Activated CD4-positive, alpha-beta T cell treated with anti-CD3 and anti-CD28 coated beads, Interleukin-2, amount 10 ng/mL, durations not matched to agents 7 days and 5 days (primary cell): ENCODE measurements at regions of chr11 and their contacts with region 1.

Region 1: DNA sequence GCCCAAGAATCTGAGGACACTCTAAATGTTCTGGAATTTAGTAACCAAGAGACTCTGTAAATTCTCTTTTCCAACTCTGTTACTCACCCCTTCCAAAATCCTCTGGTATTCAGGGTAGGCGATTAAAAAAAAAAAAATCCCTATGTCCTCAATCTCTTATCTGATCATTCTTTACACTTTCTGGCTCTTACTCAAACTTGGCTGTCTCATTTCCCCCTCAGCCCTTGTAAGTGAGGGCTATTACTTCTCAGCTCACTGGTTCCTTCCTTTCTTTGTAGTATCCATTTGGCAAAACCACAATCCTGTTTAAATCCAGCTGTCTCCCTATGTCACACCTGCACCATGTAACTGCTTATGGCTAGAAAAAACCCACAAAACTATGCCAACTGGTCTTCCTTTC is 12.7 kb upstream of the MSANTD2 start:
- DNase-seq: no peak
- H3K4me3 Mint-ChIP-seq: no peak overlapping the region
- H3K27ac Mint-ChIP-seq: no peak overlapping the region
- H3K4me1 Mint-ChIP-seq: no peaks in the 10 kb centered on the region
- H3K27me3 Mint-ChIP-seq: peaks cover 40% of the 10 kb centered on the region

Region 2: DNA sequence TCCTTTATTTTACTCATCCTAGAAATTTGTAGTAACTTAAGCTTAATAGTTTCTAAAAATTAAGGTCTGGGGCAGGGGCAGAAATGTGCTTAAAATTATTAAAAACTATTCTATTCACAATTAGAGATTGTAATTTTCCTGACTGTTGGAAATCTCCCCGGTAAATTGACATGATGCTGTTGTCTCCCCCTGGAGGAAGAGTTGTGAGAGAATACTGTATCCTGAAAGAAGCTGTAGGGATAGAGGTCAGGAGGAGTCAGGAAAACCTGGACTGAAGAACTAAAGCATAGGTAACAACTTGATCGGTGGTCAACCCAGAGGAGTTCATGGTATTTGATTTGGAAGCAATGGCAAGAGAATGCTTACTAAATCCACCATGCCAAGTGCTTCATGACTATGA is 34.6 kb before region 1 on chr11:
- CTCF ChIA-PET with region 1: no interaction called
- POLR2A ChIA-PET with region 1: no interaction called
- DNase-seq: no peak
- H3K4me3 Mint-ChIP-seq: no peak overlapping the region
- H3K27ac Mint-ChIP-seq: no peak overlapping the region
- H3K4me1 Mint-ChIP-seq: peaks cover 20% of the 10 kb centered on the region
- H3K27me3 Mint-ChIP-seq: no peaks in the 10 kb centered on the region

Region 3: GRCh38 chr11:124837491-124837856 is 24.6 kb after region 1 on chr11:
- CTCF ChIA-PET with region 1: interaction called, 15 read pairs
- POLR2A ChIA-PET with region 1: no interaction called
- DNase-seq: peak; percentile 17
- H3K4me3 Mint-ChIP-seq: peak overlapping the region; percentile 67
- H3K27ac Mint-ChIP-seq: no peak overlapping the region
- H3K4me1 Mint-ChIP-seq: peaks cover 17% of the 10 kb centered on the region
- H3K27me3 Mint-ChIP-seq: peaks cover 64% of the 10 kb centered on the region